OCI-LY7 (cell line): ENCODE measurements at regions of chr13 and their contacts with region 1.

Region 1: DNA sequence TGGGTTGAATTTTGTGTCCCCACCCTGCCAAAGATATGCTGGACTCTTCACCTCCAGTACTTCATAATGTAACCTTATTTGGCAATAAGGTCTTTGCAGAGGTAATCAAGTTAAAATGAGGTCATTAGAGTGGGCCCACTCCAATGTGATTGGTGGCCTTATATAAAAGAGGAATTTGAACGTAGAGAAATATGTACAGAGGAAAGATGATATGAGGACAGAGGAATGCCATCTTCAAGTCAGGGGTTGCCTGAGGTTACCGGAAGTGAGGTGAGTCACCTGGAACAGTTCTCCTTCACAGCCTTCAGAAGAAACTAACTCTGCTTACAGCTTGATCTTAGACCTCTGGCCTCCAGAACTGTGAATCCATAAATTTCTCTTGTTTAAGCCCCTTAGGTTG is 69.9 kb downstream of the GPC5 start:
- DNase-seq: no peak
- H3K4me3 ChIP-seq: no peak overlapping the region
- H3K27ac ChIP-seq: no peak overlapping the region
- H3K4me1 ChIP-seq: no peaks in the 10 kb centered on the region
- CTCF ChIP-seq: no peak

Region 2: DNA sequence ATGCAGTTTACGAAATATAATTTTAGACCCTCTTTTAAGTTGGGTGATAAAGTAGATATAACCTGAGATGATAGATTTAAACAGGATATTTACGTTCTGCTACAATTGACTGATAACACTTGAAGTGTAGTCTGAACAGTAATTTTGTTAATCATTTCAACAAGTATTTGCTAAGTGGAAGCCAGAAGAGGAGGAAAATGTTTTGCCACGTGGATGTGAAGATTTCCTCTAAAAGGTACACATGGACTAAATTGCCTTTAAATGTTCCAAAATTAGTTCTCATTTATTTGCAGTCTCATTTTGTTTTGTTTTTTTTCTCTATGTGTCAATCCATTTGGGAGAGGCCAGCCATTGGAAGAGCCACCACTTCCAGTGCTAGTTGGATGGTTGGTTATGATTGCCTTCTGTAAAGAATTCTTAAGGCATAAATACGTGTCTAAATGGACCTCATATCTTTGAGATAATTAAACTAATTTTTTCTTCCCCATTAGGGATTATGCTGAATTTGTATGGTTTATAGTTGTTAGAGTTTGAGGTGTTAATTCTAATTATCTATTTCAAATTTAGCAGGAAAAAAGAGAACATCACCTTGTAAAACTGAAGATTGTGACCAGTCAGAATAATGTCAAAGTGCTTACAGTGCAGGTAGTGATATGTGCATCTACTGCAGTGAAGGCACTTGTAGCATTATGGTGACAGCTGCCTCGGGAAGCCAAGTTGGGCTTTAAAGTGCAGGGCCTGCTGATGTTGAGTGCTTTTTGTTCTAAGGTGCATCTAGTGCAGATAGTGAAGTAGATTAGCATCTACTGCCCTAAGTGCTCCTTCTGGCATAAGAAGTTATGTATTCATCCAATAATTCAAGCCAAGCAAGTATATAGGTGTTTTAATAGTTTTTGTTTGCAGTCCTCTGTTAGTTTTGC is 118.0 kb before region 1 on chr13:
- CTCF ChIA-PET with region 1: no interaction called
- POLR2A ChIA-PET with region 1: no interaction called
- intact Hi-C with region 1: no loop called
- DNase-seq: peak; percentile 71
- H3K4me3 ChIP-seq: peak overlapping the region; percentile 64
- H3K27ac ChIP-seq: peak overlapping the region; percentile 75
- H3K4me1 ChIP-seq: peaks cover 70% of the 10 kb centered on the region
- CTCF ChIP-seq: no peak

Region 3: GRCh38 chr13:91450913-91451312 is 17.4 kb before region 1 on chr13:
- CTCF ChIA-PET with region 1: no interaction called
- POLR2A ChIA-PET with region 1: interaction called, 60 read pairs
- intact Hi-C with region 1: no loop called
- DNase-seq: no peak
- H3K4me3 ChIP-seq: no peak overlapping the region
- H3K27ac ChIP-seq: no peak overlapping the region
- H3K4me1 ChIP-seq: no peaks in the 10 kb centered on the region
- CTCF ChIP-seq: no peak

Region 4: GRCh38 chr13:91482427-91482826 is 14.1 kb after region 1 on chr13:
- CTCF ChIA-PET with region 1: no interaction called
- POLR2A ChIA-PET with region 1: interaction called, 10 read pairs
- intact Hi-C with region 1: no loop called
- DNase-seq: no peak
- H3K4me3 ChIP-seq: no peak overlapping the region
- H3K27ac ChIP-seq: no peak overlapping the region
- H3K4me1 ChIP-seq: no peaks in the 10 kb centered on the region
- CTCF ChIP-seq: no peak